ENCODE measurements at regions of chr18 and their contacts with region 1.

Region 1: DNA sequence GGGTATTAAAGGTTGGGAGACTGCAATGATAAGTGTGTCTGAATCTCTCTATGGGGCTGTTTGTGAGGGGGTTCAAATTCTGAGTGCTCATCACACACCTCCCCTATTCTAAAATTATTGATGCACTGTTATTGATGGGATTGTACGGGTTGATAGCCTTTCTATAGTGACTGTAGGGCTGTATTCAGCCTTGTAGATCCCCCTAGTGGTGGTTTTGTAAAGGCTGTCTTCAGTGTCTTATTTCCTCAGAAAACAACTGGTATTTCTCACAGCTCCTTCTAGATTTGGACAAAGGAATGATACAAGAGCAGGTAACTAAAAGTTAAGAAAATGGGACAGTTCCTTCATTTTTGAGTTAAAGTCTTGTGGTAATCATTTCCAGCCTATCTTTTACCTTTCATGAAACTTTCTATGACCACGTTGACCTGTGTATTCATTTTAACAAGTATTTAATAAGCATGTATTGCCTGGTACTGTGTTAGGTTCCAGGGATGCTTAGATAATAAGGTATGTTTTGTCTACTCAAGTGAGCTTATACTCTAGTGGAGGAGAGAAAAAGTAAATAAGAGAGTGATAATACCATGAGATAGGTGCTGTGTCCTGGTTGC is 21.2 kb downstream of the SMAD4 start:
- DNase-seq: no peak
- H3K4me3 ChIP-seq: no peak overlapping the region
- H3K27me3 ChIP-seq: no peaks in the 10 kb centered on the region
- CTCF ChIP-seq: peak; percentile 88

Region 2: GRCh38 chr18:50819728-50820378 is 231.4 kb before region 1 on chr18 and contains the start of gene MRO:
- CTCF ChIA-PET with region 1: interaction called, 18 read pairs
- POLR2A ChIA-PET with region 1: no interaction called
- DNase-seq: peak; percentile 10
- H3K4me3 ChIP-seq: peak within 1 kb of the TSS; percentile 25
- H3K27me3 ChIP-seq: no peaks in the 10 kb centered on the region
- CTCF ChIP-seq: peak; percentile 97
- polyA plus RNA-seq, gene MRO: not detected in 2 replicates

Region 3: GRCh38 chr18:51030537-51031258 is 20.5 kb before region 1 on chr18:
- CTCF ChIA-PET with region 1: interaction called, 21 read pairs
- POLR2A ChIA-PET with region 1: no interaction called
- DNase-seq: no peak
- H3K4me3 ChIP-seq: peak overlapping the region; percentile 51
- H3K27me3 ChIP-seq: no peaks in the 10 kb centered on the region
- CTCF ChIP-seq: no peak

Region 4: DNA sequence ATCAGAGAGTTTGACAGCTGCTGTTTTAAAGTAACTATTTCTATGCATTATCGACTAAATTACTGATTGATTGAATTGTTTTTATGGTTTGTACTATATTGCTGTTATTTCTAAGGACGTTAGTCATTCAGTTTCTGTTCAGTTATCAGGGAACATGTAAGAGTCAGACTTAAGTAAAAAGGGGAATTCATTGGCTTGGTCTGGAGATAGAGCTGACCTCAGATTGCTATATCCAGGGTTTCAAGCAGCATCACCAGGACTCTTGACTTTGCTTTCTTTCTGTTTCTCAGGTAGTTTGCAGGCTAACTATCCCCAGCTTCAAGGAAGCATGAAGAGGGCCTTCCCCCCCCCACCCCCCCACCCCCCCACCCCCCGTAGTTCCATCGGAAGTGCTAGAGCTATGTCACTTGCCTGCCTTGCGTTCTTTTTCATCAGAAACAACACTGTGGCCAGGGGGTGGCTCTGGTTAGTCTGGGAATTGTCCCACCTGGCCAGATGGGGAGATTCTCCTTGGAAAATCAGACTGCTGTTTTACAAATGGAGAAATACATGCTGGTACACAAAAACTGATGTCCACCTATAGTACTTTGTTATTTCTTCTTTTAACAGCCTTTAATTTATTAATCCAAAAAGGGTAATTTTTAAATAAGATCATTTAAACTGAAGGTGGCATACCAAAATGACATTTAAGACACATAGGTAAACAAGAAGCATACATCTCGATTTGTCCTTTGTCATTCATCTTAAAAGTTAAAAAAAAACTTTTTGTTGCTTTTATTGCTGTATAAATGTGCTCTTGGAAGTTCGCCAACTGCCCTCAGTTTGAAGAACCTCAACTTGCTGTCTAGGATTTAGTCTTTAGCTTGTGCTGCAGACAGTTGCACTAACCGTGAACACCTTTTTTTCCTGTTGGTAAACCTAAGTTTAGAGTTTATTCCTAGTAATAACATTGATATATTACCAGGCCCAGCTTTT is 11.8 kb before region 1 on chr18:
- CTCF ChIA-PET with region 1: interaction called, 24 read pairs
- POLR2A ChIA-PET with region 1: no interaction called
- DNase-seq: no peak
- H3K4me3 ChIP-seq: no peak overlapping the region
- H3K27me3 ChIP-seq: no peaks in the 10 kb centered on the region
- CTCF ChIP-seq: no peak

Region 5: GRCh38 chr18:51120809-51121596 is 69.8 kb after region 1 on chr18:
- CTCF ChIA-PET with region 1: no interaction called
- POLR2A ChIA-PET with region 1: no interaction called
- DNase-seq: no peak
- H3K4me3 ChIP-seq: no peak overlapping the region
- H3K27me3 ChIP-seq: no peaks in the 10 kb centered on the region
- CTCF ChIP-seq: no peak